Left ventricle myocardium superior (tissue), 1 donor: ENCODE measurements at regions of chr6 and their contacts with region 1.

Region 1: GRCh38 chr6:158605266-158605878 is 39.2 kb downstream of the DYNLT1 start:
- DNase-seq: no peak
- ATAC-seq: peak; percentile 51

Region 2: GRCh38 chr6:158213925-158214674 is 391.3 kb before region 1 on chr6:
- intact Hi-C with region 1: loop called (anchors 10 kb)
- DNase-seq: peak; percentile 68
- ATAC-seq: peak; percentile 94